Motor neuron (in vitro differentiated cells): ENCODE measurements at regions of chr6 and their contacts with region 1.

Region 1: GRCh38 chr6:111361648-111362047 is 121.4 kb downstream of the REV3L start:
- ATAC-seq: peak in 4 of 8 experiments; percentile 30 to 60 (median 44)
- H3K4me3 ChIP-seq: no peak overlapping the region
- H3K27ac ChIP-seq: no peak overlapping the region
- H3K4me1 ChIP-seq: no peaks in the 10 kb centered on the region

Region 2: DNA sequence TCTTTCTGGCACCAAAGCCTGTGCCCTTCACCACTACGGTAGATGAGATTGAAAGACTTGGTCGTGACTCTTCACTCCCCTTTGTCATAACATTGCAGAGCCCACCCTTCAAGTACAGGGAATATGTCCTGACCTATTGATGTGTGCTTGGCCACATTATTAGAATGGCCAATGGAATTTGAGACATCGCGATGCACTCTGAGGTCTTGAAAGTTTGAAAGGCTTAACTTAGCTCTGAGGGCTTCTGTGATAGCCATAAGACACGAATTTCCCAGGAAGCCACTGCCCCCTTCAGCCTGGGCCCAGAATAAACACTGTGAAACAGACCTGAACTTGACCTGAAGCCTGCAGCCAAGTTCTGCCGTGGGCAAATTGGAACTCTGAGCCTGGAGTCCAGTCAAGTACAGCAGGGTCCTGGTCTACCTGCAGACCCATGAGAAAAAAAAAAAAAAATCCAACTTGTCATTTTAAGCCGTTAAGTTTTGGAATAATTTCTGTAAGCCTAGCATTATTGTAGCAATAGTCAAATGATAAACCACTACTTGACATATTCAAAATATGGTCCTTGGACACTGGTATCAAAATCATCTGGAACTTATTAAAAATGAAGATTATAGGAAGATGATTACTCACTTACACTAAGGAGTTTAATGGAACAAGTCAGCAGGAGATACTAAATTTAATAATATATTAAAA is 281.0 kb after region 1 on chr6:
- in situ Hi-C with region 1: loop called in 1 of 9 experiments (anchors 25 kb)
- ATAC-seq: peak; percentile 43 to 96 (median 66)
- H3K4me3 ChIP-seq: no peak overlapping the region
- H3K27ac ChIP-seq: no peak overlapping the region
- H3K4me1 ChIP-seq: no peaks in the 10 kb centered on the region